Left cardiac atrium (tissue), 4 donors: ENCODE measurements at regions of chr3 and their contacts with region 1.

Region 1: DNA sequence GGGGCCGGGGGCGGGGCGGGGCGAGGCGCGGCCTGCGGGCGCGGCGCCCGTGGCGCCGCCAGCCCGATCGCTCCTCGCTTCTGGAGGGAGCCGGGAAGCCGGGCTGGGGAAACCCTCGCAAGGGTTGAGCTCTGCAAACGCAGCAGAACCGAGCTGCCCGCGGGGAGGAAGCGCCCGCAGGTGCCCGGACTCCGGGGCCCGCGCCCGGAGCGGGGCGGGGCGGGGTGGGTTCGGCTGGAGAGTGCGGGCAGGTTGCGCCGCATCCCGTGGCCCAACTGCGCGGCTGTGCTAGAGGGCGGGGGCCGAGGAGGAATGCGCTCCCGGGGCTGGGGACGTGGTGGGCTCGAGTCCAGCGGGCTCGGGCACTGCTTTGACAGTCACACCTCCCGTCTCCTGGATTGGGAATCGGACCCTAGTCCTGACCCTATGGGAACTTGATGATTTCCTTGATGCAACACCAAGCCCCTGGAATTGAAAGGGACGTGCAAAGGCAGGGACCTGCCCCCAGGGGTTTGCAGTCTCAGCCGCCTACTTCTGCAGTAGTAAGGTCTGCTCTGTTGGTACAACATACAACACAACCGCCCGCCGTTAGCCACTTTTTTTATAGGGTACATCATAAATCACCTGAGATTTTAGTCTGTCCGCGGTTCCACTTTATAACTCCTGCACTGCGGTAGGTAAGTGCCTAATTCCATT is 34.3 kb downstream of the ZBTB38 start:
- DNase-seq: peak; percentile 77
- ATAC-seq: peak; percentile 84 to 87

Region 2: GRCh38 chr3:141368062-141368924 is 34.3 kb before region 1 on chr3 and contains the start of gene ZBTB38:
- intact Hi-C with region 1: loop called in 1 of 2 experiments (anchors 5 kb)
- DNase-seq: peak; percentile 95
- ATAC-seq: peak; percentile 91 to 94
- total RNA-seq, gene ZBTB38: 62.9 to 72.6 TPM

Region 3: DNA sequence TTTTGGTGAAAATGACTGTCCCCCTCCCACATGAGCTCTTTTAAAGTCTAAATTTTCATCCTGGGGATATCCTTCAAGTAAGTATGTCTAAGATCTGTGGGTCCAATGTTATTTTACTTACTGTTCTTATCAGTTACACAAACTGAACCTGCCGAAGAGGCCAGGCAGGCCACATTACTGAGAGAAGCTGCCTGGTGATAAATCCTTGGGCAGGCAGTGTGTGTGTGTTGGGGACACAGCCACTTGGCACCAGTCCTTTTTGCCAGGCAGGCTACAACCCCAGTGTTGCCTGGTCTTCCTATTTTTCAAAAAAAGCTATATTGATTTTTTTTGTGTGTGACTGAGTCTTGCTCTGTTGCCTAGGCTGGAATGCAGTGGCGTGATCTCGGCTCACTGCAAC is 33.6 kb after region 1 on chr3:
- intact Hi-C with region 1: loop called in 1 of 2 experiments (anchors 5 kb)
- DNase-seq: no peak
- ATAC-seq: peak in 1 of 2 donors; percentile 30

Region 4: DNA sequence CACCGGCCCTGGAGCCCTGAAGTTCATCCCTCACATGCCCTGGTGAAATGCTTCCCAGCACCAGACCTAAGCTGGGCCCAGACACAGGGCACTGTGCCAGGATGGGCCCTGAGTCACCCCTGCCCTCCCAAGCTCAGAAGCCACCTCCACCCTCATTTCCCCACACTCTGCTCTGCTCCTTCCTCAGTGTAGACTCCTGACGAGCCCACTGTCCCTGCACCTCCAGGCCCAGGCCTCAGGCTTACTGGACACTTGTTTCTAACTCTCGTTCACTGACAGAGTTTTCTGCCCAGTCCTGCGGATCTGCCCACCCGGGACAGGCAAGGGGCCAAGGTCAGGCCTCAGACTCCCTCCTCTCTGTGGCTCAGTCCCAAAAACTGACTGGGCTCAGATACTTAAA is 222.9 kb after region 1 on chr3:
- intact Hi-C with region 1: no loop called
- DNase-seq: no peak
- ATAC-seq: peak in 1 of 2 donors; percentile 64